ENCODE measurements at regions of chr4 and their contacts with region 1.

Region 1: GRCh38 chr4:931960-932712 is at the starts of genes GAK and TMEM175:
- DNase-seq: peak; percentile 98
- ATAC-seq: peak; percentile 94
- H3K4me3 ChIP-seq: peak within 1 kb of the TSS; percentile 62 to 99 (median 93)
- H3K4me3 Mint-ChIP-seq: peak within 1 kb of the TSS; percentile 91
- H3K27ac ChIP-seq: peak within 1 kb of the TSS; percentile 62 to 98
- H3K27ac Mint-ChIP-seq: peak within 1 kb of the TSS; percentile 96
- H3K4me1 ChIP-seq: peaks cover 68 to 69% of the 10 kb centered on the region in 2 donors
- H3K4me1 Mint-ChIP-seq: peaks cover 83% of the 10 kb centered on the region
- H3K27me3 ChIP-seq: no peaks in the 10 kb centered on the region
- H3K27me3 Mint-ChIP-seq: no peaks in the 10 kb centered on the region
- CTCF ChIP-seq: no peak
- total RNA-seq, gene GAK: 283 and 302 TPM in 2 replicates
- total RNA-seq, gene TMEM175: 44.4 and 47.9 TPM in 2 replicates

Region 2: GRCh38 chr4:498328-498904 is 433.7 kb before region 1 on chr4:
- CTCF ChIA-PET with region 1: no interaction called
- POLR2A ChIA-PET with region 1: no interaction called
- intact Hi-C with region 1: loop called (anchors 10 kb)
- DNase-seq: peak; percentile 55
- ATAC-seq: peak; percentile 4
- H3K4me3 ChIP-seq: peak overlapping the region; percentile 62 to 87 (median 82)
- H3K4me3 Mint-ChIP-seq: peak overlapping the region; percentile 92
- H3K27ac ChIP-seq: peak overlapping the region; percentile 92 to 96
- H3K27ac Mint-ChIP-seq: peak overlapping the region; percentile 97
- H3K4me1 ChIP-seq: peaks cover 11 to 16% of the 10 kb centered on the region in 2 donors
- H3K4me1 Mint-ChIP-seq: peaks cover 26% of the 10 kb centered on the region
- H3K27me3 ChIP-seq: no peaks in the 10 kb centered on the region
- H3K27me3 Mint-ChIP-seq: no peaks in the 10 kb centered on the region
- CTCF ChIP-seq: no peak

Region 3: GRCh38 chr4:705278-706082 is 226.7 kb before region 1 on chr4 and contains the start of gene PCGF3:
- CTCF ChIA-PET with region 1: no interaction called
- POLR2A ChIA-PET with region 1: no interaction called
- intact Hi-C with region 1: loop called (anchors 10 kb)
- DNase-seq: peak; percentile 94
- ATAC-seq: peak; percentile 98
- H3K4me3 ChIP-seq: peak within 1 kb of the TSS; percentile 42 to 90 (median 79)
- H3K4me3 Mint-ChIP-seq: peak within 1 kb of the TSS; percentile 90
- H3K27ac ChIP-seq: peak within 1 kb of the TSS; percentile 63 to 91
- H3K27ac Mint-ChIP-seq: peak within 1 kb of the TSS; percentile 93
- H3K4me1 ChIP-seq: peaks cover 17 to 30% of the 10 kb centered on the region in 2 donors
- H3K4me1 Mint-ChIP-seq: peaks cover 30% of the 10 kb centered on the region
- H3K27me3 ChIP-seq: no peaks in the 10 kb centered on the region
- H3K27me3 Mint-ChIP-seq: no peaks in the 10 kb centered on the region
- CTCF ChIP-seq: no peak
- total RNA-seq, gene PCGF3: 83.4 and 90.3 TPM in 2 replicates

Region 4: DNA sequence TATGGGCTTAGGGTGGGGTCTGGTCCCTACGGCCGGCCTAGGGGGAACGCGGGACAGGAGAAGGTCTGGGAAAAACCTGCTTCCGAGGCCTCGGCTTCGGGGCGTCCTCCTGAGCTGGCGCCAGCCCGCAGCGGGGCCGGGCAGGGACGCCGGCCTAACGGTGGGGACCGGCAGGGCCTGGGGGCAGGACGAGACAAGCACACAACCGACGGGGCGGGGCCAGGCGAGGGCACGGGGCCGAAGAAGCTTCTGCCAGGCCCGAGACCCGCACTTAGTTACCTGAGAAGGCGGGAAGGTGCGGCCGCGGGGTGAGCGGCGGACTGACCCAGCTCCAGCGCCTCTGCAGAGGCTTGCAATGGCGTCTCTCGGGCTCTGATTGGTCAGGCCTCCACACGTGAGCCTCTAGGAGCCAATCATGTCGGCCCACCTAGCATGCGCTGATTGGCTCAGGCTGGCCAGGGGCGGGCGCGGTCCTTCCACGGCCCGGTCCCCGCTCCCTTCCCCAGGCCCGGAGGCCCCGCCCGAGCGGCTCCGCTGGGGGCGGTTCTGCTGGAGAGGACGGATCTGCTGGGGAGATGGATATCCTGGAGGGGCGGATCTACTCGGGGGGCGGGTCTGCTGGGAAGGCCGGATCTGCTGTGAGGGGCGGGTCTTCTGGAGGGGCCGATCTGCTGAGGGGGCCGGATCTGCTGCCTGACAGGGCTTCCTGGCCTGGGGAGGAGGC is 150.5 kb before region 1 on chr4:
- CTCF ChIA-PET with region 1: no interaction called
- POLR2A ChIA-PET with region 1: no interaction called
- intact Hi-C with region 1: loop called (anchors 1 kb)
- DNase-seq: peak; percentile 99
- ATAC-seq: peak; percentile 94
- H3K4me3 ChIP-seq: peak overlapping the region; percentile 23 to 97 (median 85)
- H3K4me3 Mint-ChIP-seq: peak overlapping the region; percentile 94
- H3K27ac ChIP-seq: peak overlapping the region; percentile 82 to 95
- H3K27ac Mint-ChIP-seq: peak overlapping the region; percentile 91
- H3K4me1 ChIP-seq: peaks cover 38 to 40% of the 10 kb centered on the region in 2 donors
- H3K4me1 Mint-ChIP-seq: peaks cover 48% of the 10 kb centered on the region
- H3K27me3 ChIP-seq: peaks cover 0 to 26% (median 11%) of the 10 kb centered on the region in 4 experiments
- H3K27me3 Mint-ChIP-seq: peaks cover 18% of the 10 kb centered on the region
- CTCF ChIP-seq: no peak

Region 5: DNA sequence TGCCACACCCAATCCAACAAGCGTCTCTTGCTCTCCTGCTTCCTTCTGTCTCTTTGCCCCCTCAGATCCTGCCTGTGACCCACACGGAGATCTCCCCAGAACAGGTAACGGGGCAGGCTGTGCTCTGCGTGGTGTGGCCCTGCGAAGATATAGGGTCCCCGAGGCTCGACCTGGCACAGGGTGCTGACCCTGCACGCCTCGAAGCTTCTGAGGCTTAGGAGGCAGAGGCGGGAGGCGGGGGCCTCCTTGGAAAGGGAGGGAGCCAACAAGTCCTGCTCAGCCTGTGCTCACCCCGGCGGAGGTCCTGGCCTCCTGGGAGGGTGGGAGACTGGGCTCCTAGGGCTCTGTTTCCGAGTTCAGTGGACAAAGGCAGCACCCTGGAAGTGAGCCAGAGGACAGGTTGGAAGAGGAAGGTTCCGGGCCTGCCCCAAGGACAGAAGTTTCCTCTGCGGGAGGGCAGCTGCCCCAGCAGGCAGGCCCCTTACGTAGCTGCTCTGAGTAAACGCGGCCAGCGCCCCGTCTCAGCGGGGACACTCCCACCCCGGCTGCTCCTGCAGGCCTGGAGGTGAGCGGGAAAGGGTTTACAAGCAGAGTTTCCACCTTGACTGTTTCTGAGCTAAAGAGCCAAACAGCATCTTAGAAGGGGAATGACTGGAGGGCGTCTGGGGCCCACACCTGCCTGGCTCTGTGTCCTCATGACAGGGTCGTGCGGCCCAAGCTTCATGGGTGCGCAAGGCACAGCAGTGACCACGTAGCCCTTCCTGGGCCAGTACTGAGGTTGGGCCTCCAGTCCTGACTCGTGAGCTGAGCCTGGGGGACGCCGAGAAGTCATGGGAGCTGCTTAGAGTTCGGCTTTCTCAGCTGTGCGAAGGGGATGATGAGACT is 16.2 kb after region 1 on chr4:
- CTCF ChIA-PET with region 1: no interaction called
- POLR2A ChIA-PET with region 1: no interaction called
- intact Hi-C with region 1: no loop called
- DNase-seq: no peak
- ATAC-seq: no peak
- H3K4me3 ChIP-seq: no peak overlapping the region
- H3K4me3 Mint-ChIP-seq: no peak overlapping the region
- H3K27ac ChIP-seq: no peak overlapping the region
- H3K27ac Mint-ChIP-seq: no peak overlapping the region
- H3K4me1 ChIP-seq: peaks cover 0 to 18% of the 10 kb centered on the region in 2 donors
- H3K4me1 Mint-ChIP-seq: peaks cover 16% of the 10 kb centered on the region
- H3K27me3 ChIP-seq: no peaks in the 10 kb centered on the region
- H3K27me3 Mint-ChIP-seq: no peaks in the 10 kb centered on the region
- CTCF ChIP-seq: no peak

Region 6: GRCh38 chr4:973431-974397 is 41.6 kb after region 1 on chr4 and contains the start of gene DGKQ:
- CTCF ChIA-PET with region 1: no interaction called
- POLR2A ChIA-PET with region 1: interaction called, 3 read pairs
- intact Hi-C with region 1: loop called (anchors 1 kb)
- DNase-seq: peak; percentile 92
- ATAC-seq: peak; percentile 99
- H3K4me3 ChIP-seq: peak within 1 kb of the TSS; percentile 23 to 76 (median 66)
- H3K4me3 Mint-ChIP-seq: peak within 1 kb of the TSS; percentile 61
- H3K27ac ChIP-seq: no peak within 1 kb of the TSS
- H3K27ac Mint-ChIP-seq: peak within 1 kb of the TSS; percentile 41
- H3K4me1 ChIP-seq: peaks cover 10 to 17% of the 10 kb centered on the region in 2 donors
- H3K4me1 Mint-ChIP-seq: peaks cover 9% of the 10 kb centered on the region
- H3K27me3 ChIP-seq: peaks cover 0 to under 1% (median 0%) of the 10 kb centered on the region in 4 experiments
- H3K27me3 Mint-ChIP-seq: no peaks in the 10 kb centered on the region
- CTCF ChIP-seq: no peak
- total RNA-seq, gene DGKQ: 30.4 and 34.9 TPM in 2 replicates

Region 7: DNA sequence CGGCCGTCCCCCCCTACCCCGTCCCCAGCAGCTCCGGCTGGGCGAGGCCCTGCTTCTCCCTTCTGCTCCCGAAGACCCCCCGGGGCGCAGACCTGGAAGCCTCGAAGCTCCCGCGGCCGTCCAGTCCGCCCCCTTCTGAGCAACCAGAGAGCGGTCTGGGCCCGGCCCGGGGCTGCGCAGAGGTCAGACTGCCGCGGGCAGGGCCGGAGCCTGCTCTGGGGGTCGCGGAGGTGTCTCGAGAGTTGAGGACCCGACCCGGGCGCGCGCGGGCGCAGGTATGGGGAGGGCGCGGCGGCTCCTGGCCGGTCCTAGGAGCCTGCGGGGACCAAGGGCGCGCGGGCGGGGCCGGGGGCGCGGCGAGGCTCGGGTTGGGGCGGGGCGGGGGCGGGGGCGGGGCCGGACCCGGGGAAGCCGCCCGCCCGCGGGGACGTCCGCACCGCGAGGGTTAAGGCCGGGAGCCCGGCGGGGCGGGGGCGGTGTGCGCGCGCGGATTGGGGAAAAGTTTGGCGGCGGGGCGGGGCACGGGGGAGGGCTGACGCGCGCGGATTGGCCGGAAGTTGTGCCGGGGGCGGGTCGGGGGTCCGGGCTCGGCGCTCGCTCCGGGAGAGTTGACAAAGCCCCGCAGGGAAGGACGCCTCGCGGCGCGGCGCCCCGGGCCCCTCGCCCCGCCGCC is 79.0 kb after region 1 on chr4 and contains the start of gene FGFRL1:
- CTCF ChIA-PET with region 1: interaction called, 4 read pairs
- POLR2A ChIA-PET with region 1: no interaction called
- intact Hi-C with region 1: loop called (anchors 5 kb)
- DNase-seq: peak; percentile 92
- ATAC-seq: peak; percentile 63
- H3K4me3 ChIP-seq: peak within 1 kb of the TSS in 4 of 5 experiments; percentile 60 to 74 (median 66)
- H3K4me3 Mint-ChIP-seq: peak within 1 kb of the TSS; percentile 91
- H3K27ac ChIP-seq: peak within 1 kb of the TSS; percentile 36 to 38
- H3K27ac Mint-ChIP-seq: peak within 1 kb of the TSS; percentile 89
- H3K4me1 ChIP-seq: peaks cover 24 to 30% of the 10 kb centered on the region in 2 donors
- H3K4me1 Mint-ChIP-seq: peaks cover 20% of the 10 kb centered on the region
- H3K27me3 ChIP-seq: peaks cover 0 to 24% (median 12%) of the 10 kb centered on the region in 4 experiments
- H3K27me3 Mint-ChIP-seq: peaks cover 29% of the 10 kb centered on the region
- CTCF ChIP-seq: no peak
- total RNA-seq, gene FGFRL1: 28.5 and 28.9 TPM in 2 replicates

Measured in B cell (primary cell).